ENCODE measurements at regions of chr9 and their contacts with region 1.

Region 1: GRCh38 chr9:86098824-86099700 is at the start of gene GOLM1:
- DNase-seq: peak; percentile 84
- H3K4me3 Mint-ChIP-seq: peak within 1 kb of the TSS; percentile 91
- H3K27ac Mint-ChIP-seq: peak within 1 kb of the TSS; percentile 88
- H3K4me1 Mint-ChIP-seq: peaks cover 5% of the 10 kb centered on the region
- H3K27me3 Mint-ChIP-seq: peaks cover 60% of the 10 kb centered on the region
- total RNA-seq, gene GOLM1: 5.5 and 6.6 TPM in 2 replicates

Region 2: GRCh38 chr9:85940832-85941621 is 158.0 kb before region 1 on chr9 and contains the start of gene NAA35:
- intact Hi-C with region 1: loop called (anchors 5 kb)
- DNase-seq: peak; percentile 100
- H3K4me3 Mint-ChIP-seq: no peak within 1 kb of the TSS
- H3K27ac Mint-ChIP-seq: peak within 1 kb of the TSS; percentile 92
- H3K4me1 Mint-ChIP-seq: peaks cover 11% of the 10 kb centered on the region
- H3K27me3 Mint-ChIP-seq: no peaks in the 10 kb centered on the region
- total RNA-seq, gene NAA35: 28.0 and 29.6 TPM in 2 replicates

Measured in activated CD4-positive, alpha-beta T cell treated with anti-CD3 and anti-CD28 coated beads, Interleukin-2, amount 10 ng/mL, durations not matched to agents 24 days and 14 days (primary cell).